ENCODE measurements at regions of chr16 and their contacts with region 1.

Region 1: DNA sequence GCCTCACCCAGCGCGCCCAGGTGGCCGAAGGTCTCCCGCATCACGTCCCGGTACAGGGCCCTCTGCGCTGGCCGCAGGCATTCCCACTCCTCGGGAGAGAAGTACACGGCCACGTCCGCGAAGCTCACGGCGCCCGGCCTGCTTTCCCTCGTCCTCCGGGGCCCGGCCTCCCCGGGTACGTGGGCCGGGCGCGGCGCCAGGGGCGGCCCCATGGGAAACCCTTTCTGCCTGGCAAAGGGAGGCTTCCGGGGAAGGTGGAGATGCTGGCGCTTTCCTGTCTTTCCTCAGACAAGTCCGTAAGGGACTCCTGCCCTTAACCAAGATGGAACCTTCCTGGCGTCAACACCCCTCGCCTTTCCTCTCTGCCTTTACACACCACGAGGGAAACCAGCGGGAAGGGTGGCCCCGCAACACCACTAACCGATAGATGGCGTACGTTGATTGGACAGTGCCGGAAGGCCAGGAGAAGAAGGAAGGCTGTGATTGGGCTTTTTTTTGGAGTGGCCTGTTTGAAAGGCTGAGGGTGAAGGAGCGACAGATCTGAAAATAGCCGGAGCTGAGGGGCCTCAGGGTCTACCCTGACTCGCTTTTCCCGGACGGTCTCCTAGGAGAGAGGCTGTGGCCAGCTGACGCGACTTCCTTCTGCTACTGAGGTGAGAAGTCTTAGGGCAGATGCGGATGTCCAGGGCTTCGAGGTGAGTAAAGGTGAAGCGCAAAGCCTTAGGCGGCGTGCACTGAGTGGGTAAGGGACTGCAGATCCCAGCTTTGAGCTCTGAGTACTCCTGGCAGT is at the start of gene ZNF785:
- DNase-seq: peak; percentile 97
- ATAC-seq: peak; percentile 99
- total RNA-seq, gene ZNF785: 7.6 TPM

Region 2: GRCh38 chr16:30351586-30352336 is 233.8 kb before region 1 on chr16:
- intact Hi-C with region 1: no loop called
- DNase-seq: peak; percentile 81
- ATAC-seq: peak; percentile 32

Region 3: GRCh38 chr16:30429678-30430427 is 155.7 kb before region 1 on chr16 and contains the start of gene DCTPP1:
- intact Hi-C with region 1: loop called (anchors 5 kb)
- DNase-seq: peak; percentile 96
- ATAC-seq: peak; percentile 99
- total RNA-seq, gene DCTPP1: 35.2 TPM

Region 4: DNA sequence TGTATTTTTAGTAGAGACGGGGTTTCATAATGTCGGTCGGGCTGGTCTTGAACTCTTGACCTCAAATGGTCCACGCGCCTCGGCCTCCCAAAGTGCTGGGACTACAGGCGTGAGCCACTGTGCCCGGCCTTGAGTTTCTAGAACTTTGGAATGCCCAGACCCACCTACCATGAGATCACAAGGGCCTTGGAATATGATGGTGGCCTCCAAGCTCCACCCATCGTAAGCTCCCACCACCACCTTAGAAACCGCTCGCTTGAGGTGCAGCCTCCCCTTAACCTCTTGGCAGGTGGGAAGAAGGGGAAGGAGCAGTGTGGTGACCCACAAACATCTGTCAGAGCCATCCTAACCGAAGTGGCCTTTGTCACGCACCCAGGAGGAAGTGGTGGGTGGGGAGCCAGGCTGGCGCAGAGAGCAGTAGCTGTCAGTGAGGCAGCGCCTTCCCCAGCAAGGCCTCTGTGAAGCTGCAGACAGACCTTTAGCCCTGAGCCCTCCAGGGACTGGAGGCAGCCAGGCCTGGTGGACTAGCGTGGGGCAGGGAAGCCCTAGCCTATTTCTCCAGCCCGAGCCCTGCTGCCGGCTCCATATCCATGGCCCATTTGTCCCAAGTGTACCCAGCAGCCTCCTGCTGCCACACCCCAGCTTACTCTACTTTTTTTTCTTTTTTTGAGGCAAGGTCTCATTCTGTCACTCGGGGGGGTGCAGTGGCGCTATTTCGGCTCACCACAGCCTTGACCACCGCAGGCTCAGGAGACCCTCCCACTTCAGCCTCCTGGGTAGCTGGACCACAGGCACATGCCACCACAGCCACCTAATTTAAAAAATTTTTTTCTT is 126.8 kb before region 1 on chr16:
- intact Hi-C with region 1: no loop called
- DNase-seq: peak; percentile 73
- ATAC-seq: peak; percentile 44

Region 5: DNA sequence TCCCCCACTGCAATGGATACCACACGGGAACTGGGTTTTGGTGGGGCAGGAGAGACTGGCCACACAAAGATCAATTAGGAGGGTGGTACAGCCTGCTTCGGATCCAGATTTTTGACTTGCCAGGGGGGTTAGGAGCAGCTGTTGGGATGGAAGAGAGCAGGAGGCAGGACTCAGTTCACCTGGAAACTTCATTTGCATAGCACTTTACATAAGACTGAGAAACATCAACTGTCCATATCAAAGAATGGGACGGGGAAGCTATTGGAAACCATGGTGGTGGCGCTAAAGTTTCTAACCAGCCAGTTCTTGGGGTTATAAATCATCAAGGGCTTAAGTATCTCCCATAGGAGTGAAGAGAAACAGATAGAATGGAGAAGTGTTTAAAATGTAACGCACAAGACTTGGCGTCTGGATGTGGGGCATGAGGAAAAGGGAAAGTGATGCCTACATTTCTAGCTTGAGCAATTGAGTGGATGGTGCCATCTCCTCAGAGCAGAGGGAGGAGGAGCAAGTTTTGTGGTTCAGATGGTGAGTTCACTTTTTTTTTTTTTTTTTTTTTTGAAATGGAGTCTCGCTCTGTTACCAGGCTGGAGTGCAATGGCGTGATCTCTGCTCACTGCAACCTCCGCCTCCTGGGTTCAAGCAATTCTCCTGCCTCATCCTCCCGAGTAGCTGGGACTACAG is 106.9 kb after region 1 on chr16:
- intact Hi-C with region 1: loop called (anchors 5 kb)
- DNase-seq: no peak
- ATAC-seq: no peak

Region 6: GRCh38 chr16:30838876-30839471 is 253.4 kb after region 1 on chr16:
- intact Hi-C with region 1: no loop called
- DNase-seq: no peak
- ATAC-seq: no peak

Measured in Right ventricle myocardium inferior (tissue), 1 donor.